Heart left ventricle (tissue), 16 donors: ENCODE measurements at regions of chr12 and their contacts with region 1.

Region 1: DNA sequence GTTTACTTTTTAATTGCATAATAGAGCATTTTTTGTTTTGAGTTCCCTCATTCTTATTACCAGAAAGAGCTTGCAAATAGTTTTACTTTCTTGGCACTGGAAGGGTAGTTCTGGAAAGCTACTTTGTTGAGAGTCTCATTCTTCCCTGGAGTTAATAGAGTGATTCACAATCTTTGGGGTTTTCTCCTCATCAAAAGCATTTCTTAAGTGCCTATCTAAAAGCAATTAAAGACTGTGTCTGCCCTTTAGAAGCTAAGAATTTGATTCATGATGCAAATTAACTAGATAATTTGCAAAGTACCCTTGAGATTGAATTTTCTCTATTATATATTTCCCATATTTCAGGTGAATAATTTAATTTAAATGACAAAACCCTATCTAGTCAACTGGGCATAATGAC is 8.1 kb upstream of the BMAL2 start:
- DNase-seq: no peak
- ATAC-seq: no peak
- H3K4me3 ChIP-seq: no peak overlapping the region
- H3K27ac ChIP-seq: no peak overlapping the region
- H3K4me1 ChIP-seq: no peaks in the 10 kb centered on the region
- H3K27me3 ChIP-seq: no peaks in the 10 kb centered on the region
- CTCF ChIP-seq: no peak
- POLR2A ChIP-seq: no peak

Region 2: GRCh38 chr12:27667540-27667939 is 343.0 kb after region 1 on chr12:
- intact Hi-C with region 1: loop called in 2 of 10 experiments (anchors 10 kb)
- DNase-seq: peak in 2 of 5 donors; percentile 31 to 70
- ATAC-seq: peak; percentile 59 to 92 (median 70)
- H3K4me3 ChIP-seq: no peak overlapping the region
- H3K27ac ChIP-seq: peak overlapping the region in 3 of 12 donors; percentile 19 to 39 (median 39)
- H3K4me1 ChIP-seq: peaks cover 0 to 16% (median 5%) of the 10 kb centered on the region in 12 donors
- H3K27me3 ChIP-seq: no peaks in the 10 kb centered on the region
- CTCF ChIP-seq: no peak
- POLR2A ChIP-seq: no peak

Region 3: GRCh38 chr12:27673101-27673718 is 348.7 kb after region 1 on chr12:
- intact Hi-C with region 1: loop called in 2 of 10 experiments (anchors 10 kb)
- DNase-seq: no peak
- ATAC-seq: peak; percentile 83 to 94 (median 88)
- H3K4me3 ChIP-seq: peak overlapping the region in 1 of 12 donors; percentile 14
- H3K27ac ChIP-seq: peak overlapping the region; percentile 22 to 76 (median 58)
- H3K4me1 ChIP-seq: peaks cover 0 to 38% (median 25%) of the 10 kb centered on the region in 12 donors
- H3K27me3 ChIP-seq: no peaks in the 10 kb centered on the region
- CTCF ChIP-seq: no peak
- POLR2A ChIP-seq: no peak